Common myeloid progenitor, CD34-positive (primary cell): ENCODE measurements at regions of chr13 and their contacts with region 1.

Region 1: GRCh38 chr13:50911937-50912795 is 2.6 kb downstream of the RNASEH2B start:
- DNase-seq: peak; percentile 92 to 98 (median 98)
- H3K4me3 ChIP-seq: peak overlapping the region in 6 of 7 experiments; percentile 83 to 97 (median 86)
- H3K27ac ChIP-seq: peak overlapping the region; percentile 30 to 95
- H3K4me1 ChIP-seq: peaks cover 45 to 87% (median 69%) of the 10 kb centered on the region in 4 experiments
- H3K27me3 ChIP-seq: no peaks in the 10 kb centered on the region

Region 2: GRCh38 chr13:49976314-49977258 is 935.6 kb before region 1 on chr13:
- CTCF ChIA-PET with region 1: interaction called, 19 read pairs
- POLR2A ChIA-PET with region 1: no interaction called
- DNase-seq: peak; percentile 81 to 89 (median 84)
- H3K4me3 ChIP-seq: no peak overlapping the region
- H3K27ac ChIP-seq: no peak overlapping the region
- H3K4me1 ChIP-seq: peaks cover 0 to 28% (median 10%) of the 10 kb centered on the region in 4 experiments
- H3K27me3 ChIP-seq: no peaks in the 10 kb centered on the region

Region 3: GRCh38 chr13:50676602-50677001 is 235.6 kb before region 1 on chr13:
- CTCF ChIA-PET with region 1: no interaction called
- POLR2A ChIA-PET with region 1: no interaction called
- DNase-seq: peak in 2 of 3 donors; percentile 68 to 74
- H3K4me3 ChIP-seq: no peak overlapping the region
- H3K27ac ChIP-seq: no peak overlapping the region
- H3K4me1 ChIP-seq: peaks cover 0 to 2% (median 0%) of the 10 kb centered on the region in 4 experiments
- H3K27me3 ChIP-seq: peaks cover 0 to 2% (median 0%) of the 10 kb centered on the region in 5 experiments

Region 4: GRCh38 chr13:50783717-50784290 is 128.4 kb before region 1 on chr13:
- CTCF ChIA-PET with region 1: interaction called, 13 read pairs
- POLR2A ChIA-PET with region 1: no interaction called
- DNase-seq: peak; percentile 52 to 89 (median 83)
- H3K4me3 ChIP-seq: no peak overlapping the region
- H3K27ac ChIP-seq: no peak overlapping the region
- H3K4me1 ChIP-seq: peaks cover 14 to 49% (median 24%) of the 10 kb centered on the region in 4 experiments
- H3K27me3 ChIP-seq: no peaks in the 10 kb centered on the region

Region 5: DNA sequence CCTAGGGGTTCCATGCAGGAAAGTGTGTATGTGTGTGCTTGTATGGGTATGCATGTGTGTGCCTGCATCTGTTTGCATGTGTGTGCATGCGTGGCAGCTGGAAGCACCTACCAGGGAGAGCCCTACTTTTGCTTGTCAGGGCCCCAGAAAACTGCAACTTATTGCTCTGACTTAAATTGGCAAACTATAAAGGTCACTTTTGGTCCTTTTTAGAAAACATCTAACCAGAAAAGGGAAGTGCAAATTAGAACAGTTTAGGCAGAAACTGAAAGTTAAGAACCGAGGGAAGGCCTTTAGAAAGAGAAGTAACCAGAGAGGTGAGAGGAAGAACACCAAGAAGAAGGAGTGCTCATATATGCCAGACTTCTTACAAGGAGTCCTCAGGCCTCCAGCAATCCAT is 101.2 kb before region 1 on chr13:
- CTCF ChIA-PET with region 1: interaction called, 11 read pairs
- POLR2A ChIA-PET with region 1: no interaction called
- DNase-seq: peak; percentile 36 to 85 (median 79)
- H3K4me3 ChIP-seq: peak overlapping the region in 4 of 7 experiments; percentile 6 to 50 (median 12)
- H3K27ac ChIP-seq: peak overlapping the region in 1 of 2 experiments; percentile 54
- H3K4me1 ChIP-seq: peaks cover 4 to 40% (median 25%) of the 10 kb centered on the region in 4 experiments
- H3K27me3 ChIP-seq: no peaks in the 10 kb centered on the region

Region 6: GRCh38 chr13:50898338-50898737 is 13.8 kb before region 1 on chr13:
- CTCF ChIA-PET with region 1: interaction called, 22 read pairs
- POLR2A ChIA-PET with region 1: interaction called, 3 read pairs
- DNase-seq: peak in 2 of 3 donors; percentile 28 to 54
- H3K4me3 ChIP-seq: no peak overlapping the region
- H3K27ac ChIP-seq: no peak overlapping the region
- H3K4me1 ChIP-seq: peaks cover 13 to 38% (median 20%) of the 10 kb centered on the region in 4 experiments
- H3K27me3 ChIP-seq: no peaks in the 10 kb centered on the region